Posterior cingulate gyrus (tissue), 11 donors: ENCODE measurements at regions of chr12 and their contacts with region 1.

Region 1: DNA sequence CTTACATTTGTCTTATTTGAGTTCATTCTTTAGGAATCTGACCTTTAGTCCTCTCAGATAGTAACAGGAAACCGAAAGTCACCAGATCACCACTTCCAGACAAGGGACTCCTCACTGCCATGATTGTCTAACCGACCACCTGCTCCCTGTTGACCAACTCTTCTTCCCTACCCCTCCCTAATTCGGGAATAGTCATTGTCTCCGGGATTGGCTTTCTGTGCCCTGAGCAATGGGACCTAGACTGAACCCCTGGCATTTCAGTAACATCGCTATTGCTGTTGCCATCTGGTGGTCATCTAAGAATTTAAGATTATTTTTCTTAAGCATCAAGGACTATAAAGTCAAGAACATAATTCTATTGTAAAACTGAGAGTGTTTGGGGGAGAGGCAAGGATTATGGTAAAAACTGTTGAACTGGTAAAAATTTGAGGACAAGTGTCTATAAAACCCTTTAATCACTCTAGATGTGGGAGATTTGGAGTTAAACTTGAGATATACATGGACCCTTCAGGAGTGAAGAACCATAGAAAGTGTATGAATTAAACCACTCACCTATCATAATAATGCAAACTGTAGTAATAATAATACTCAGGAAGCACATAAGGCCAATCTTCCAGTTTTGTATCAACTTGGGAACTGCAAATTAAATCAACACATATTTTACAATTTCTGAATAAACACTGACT is 6.3 kb downstream of the CLEC2A start:
- DNase-seq: no peak

Region 2: GRCh38 chr12:9750276-9751203 is 175.3 kb before region 1 on chr12:
- intact Hi-C with region 1: loop called (anchors 1 kb)
- DNase-seq: peak in 4 of 10 donors; percentile 29 to 81 (median 74)

Region 3: DNA sequence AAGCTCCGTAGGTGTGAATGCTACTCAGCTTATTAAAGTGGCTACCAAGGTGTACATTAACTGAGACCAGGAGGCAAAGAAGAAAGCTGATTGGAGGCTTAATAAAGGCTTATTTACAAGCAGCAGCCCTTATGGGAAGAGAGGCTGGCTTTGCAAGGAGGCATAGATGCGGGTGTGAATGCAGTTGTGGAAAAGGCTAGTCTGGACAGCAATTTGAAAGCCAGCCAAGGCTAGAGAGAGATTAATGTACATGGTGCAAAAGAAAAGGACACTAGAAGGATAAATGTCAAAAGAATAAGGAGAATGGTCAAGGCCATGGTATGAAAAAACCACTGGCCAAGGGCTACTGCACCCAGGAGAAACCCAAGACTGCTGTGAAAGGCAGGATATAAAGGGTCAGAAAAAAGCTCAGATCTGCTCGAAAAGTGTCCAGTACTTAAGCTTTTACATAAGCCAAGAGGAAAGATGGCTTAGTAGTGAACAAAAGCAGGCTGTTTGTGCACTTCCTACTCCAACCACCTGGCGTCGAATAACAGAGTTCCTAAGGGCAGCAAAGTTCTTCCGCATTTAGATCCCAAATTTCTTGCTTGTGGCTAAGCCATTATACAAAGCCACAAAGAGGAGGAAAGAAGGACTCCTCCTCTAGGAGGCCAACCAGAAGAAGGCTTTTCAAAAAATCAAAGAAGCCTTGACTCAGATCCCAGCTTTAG is 440.0 kb after region 1 on chr12:
- intact Hi-C with region 1: no loop called
- DNase-seq: no peak